HEK293 (cell line): ENCODE measurements at regions of chr17 and their contacts with region 1.

Region 1: DNA sequence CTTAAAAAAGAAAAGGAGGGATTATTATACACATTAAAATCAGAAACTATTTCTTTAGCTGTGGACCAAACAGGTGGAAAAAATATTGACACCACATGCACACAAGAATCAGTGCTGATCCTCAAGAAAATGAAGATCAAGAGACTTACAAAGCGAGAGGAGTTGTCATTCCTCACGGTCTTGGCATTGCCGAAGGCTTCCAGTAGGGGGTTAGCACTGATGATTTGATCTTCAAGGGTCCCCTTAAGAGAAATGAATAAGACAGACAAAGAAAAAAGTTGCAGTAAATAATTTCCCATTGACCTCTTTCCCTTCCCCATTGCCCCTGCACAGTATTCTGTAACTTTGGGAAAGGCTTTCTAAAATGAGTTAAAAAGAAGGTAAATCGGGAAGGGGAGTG is 6.0 kb downstream of the MYH4 start:
- H3K4me3 ChIP-seq: no peak overlapping the region
- H3K27ac ChIP-seq: no peak overlapping the region
- H3K4me1 ChIP-seq: no peaks in the 10 kb centered on the region; the same call in 1 of the 2 replicates
- CTCF ChIP-seq: no peak

Region 2: GRCh38 chr17:10513299-10514067 is 50.1 kb after region 1 on chr17:
- CTCF ChIA-PET with region 1: no interaction called
- POLR2A ChIA-PET with region 1: no interaction called
- H3K4me3 ChIP-seq: no peak overlapping the region
- H3K27ac ChIP-seq: no peak overlapping the region
- H3K4me1 ChIP-seq: no peaks in the 10 kb centered on the region
- CTCF ChIP-seq: no peak

Region 3: DNA sequence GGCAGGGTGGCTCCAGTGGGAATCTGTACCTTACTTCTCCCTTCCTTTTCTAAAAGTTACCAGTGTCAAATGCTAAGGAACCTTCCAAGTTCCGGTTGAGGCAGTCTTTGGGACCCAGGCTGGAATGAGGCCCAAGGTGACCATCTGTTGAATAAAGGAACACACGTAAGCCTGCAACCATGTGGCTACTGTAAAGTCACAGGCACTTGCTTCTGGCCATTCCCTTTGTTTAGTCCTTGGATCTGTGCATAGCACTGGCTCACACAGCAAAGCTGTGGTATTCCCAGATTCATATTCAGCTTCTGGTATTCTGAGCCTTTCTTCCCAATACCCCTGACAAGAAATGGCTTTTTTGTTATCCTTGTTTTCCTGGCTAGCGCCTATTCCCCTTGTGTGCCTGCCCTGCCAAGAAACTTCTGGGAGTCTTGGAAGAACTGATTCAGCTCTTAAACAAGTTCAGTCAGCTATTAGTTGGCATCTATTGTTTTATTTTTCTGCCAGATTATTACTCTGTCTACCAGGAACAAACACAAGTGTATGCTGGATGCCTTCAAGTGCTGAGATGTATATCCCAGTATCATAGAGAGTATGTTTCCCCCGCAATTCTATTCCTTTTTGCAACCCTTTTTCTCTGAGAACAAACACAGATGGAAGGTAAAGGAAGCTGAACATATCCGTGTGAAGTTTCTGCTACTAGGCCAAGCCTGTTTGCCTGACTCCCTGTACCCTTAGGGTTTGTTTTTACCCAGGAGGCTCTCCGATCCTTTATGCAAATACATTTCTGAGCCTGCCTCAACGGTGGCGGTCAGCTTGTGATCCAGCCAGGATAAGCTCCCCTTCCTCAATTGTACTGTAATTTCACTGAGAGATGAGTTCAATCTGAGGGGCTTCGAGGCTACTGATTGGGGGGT is 327.3 kb after region 1 on chr17:
- CTCF ChIA-PET with region 1: interaction called, 11 read pairs
- POLR2A ChIA-PET with region 1: no interaction called
- H3K4me3 ChIP-seq: no peak overlapping the region
- H3K27ac ChIP-seq: no peak overlapping the region
- H3K4me1 ChIP-seq: 0 out of 2 replicates have a peak, but pooled peaks cover 3% of the 10 kb centered on the region
- CTCF ChIP-seq: no peak